Activated CD4-positive, alpha-beta T cell treated with anti-CD3 and anti-CD28 coated beads, Interleukin-2, amount 10 ng/mL, durations not matched to agents 24 days and 14 days (primary cell): ENCODE measurements at regions of chr1 and their contacts with region 1.

Region 1: DNA sequence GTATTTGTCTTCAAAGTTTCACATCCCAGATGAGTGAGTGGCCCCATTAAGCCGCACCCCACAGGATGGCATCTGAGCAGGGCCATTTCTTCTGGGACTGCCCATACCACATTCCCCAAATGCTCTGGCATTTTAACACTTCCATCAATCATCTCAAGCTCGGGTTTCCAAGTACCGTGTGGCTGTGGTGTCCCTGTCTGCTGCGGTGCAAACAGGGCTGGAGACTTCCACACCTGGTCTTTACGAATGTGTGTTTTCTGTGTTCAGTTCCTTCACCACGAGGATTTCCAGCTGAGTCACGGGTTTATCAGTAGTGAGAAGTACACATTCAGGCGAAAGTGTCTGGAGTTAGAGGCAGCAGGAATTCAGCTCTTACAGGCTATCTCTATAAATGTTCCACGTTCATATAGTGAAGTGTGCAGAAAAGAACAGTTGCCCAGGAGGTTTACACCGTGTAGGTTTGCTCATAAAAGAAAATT is 195.2 kb downstream of the RHOU start:
- DNase-seq: no peak
- H3K4me3 Mint-ChIP-seq: no peak overlapping the region
- H3K27ac Mint-ChIP-seq: no peak overlapping the region
- H3K4me1 Mint-ChIP-seq: peaks cover 12% of the 10 kb centered on the region
- H3K27me3 Mint-ChIP-seq: peaks cover 26% of the 10 kb centered on the region

Region 2: GRCh38 chr1:228236744-228237143 is 693.8 kb before region 1 on chr1:
- intact Hi-C with region 1: no loop called
- DNase-seq: peak; percentile 65
- H3K4me3 Mint-ChIP-seq: no peak overlapping the region
- H3K27ac Mint-ChIP-seq: no peak overlapping the region
- H3K4me1 Mint-ChIP-seq: no peaks in the 10 kb centered on the region
- H3K27me3 Mint-ChIP-seq: no peaks in the 10 kb centered on the region

Region 3: DNA sequence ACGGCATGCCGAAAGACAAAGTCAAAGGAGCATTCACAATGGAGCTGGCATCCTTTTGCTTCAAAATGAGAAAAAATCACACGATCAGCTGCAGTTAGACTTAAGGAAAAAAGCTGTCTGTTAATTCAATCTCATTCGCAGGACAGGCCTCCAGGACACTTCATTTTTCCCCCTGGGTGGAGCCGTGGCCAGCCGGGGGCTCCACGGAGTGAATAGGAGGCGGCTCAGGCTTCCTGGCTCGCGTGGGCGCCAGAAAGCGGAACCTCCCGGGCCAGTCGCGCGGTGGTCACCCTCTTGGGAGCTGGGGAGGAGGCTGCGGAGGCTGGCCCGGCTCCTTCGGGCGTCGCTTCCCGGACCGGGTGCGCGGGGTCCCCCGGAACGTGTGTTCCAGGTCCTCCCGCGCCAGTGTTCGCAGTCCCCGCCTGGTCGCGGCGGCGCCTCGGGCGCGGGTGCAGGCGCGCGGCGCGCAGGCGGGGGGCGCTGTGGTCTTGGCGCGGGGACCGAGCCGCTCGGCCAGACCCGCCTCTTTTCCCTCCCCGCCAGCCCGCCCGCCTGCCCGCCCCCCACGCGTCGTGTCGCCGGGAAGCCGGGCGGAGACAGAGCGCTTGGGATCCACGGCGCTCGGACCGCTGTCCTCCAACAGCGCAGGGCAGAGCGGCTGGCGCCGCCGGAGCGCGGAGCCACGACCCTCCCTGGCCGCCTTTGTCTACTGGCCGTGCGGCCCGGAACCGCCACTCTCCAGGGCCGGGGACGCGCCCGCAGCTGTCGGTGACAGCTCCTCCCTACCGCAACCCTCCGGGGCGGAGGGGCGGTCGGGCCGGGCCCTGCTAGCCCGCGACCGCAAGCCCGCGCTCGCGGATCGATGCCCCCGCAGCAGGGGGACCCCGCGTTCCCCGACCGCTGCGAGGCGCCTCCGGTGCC is 195.4 kb before region 1 on chr1 and contains the start of gene RHOU:
- intact Hi-C with region 1: loop called (anchors 5 kb)
- DNase-seq: peak; percentile 93
- H3K4me3 Mint-ChIP-seq: peak within 1 kb of the TSS; percentile 81
- H3K27ac Mint-ChIP-seq: peak within 1 kb of the TSS; percentile 36
- H3K4me1 Mint-ChIP-seq: peaks cover 6% of the 10 kb centered on the region
- H3K27me3 Mint-ChIP-seq: peaks cover 35% of the 10 kb centered on the region
- total RNA-seq, gene RHOU: 0.51 and 0.69 TPM in 2 replicates